ENCODE measurements at regions of chr2 and their contacts with region 1.

Region 1: DNA sequence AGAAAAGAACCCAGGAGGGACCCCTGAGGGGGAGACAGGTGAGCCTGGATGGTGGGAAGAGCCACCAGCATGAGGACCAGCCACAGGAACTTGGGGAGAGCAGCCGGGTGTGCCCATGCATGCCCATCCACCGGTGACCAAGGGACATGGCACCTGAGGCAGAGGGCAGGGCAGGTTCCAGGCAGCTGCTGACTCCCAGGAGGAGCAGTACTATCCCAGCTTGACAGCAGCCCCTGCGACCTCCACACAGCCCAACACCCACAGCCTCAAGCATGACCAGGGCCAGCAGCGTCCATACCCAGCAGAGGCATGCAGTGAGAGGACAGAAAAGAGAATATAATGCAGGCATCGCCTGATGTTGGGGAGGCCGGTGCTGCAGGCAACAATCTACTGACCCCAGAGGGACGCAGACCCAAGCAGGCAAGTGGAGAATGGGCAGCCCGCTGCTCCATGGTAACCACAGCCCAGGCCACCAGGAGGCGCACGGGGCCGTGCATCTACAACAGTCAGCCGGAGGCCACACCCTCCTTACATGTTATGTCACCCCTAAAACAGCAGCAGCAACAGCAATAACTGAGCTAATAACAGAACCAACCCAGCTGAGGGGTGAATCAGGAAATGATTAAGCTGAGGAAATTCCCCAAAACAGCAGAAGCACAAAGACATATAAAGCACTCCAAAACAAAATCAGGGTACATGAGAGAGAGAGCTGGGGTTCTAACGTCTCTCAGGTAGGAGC is 44.1 kb downstream of the ANKMY1 start:
- DNase-seq: peak; percentile 89
- ATAC-seq: peak; percentile 95 to 96

Region 2: DNA sequence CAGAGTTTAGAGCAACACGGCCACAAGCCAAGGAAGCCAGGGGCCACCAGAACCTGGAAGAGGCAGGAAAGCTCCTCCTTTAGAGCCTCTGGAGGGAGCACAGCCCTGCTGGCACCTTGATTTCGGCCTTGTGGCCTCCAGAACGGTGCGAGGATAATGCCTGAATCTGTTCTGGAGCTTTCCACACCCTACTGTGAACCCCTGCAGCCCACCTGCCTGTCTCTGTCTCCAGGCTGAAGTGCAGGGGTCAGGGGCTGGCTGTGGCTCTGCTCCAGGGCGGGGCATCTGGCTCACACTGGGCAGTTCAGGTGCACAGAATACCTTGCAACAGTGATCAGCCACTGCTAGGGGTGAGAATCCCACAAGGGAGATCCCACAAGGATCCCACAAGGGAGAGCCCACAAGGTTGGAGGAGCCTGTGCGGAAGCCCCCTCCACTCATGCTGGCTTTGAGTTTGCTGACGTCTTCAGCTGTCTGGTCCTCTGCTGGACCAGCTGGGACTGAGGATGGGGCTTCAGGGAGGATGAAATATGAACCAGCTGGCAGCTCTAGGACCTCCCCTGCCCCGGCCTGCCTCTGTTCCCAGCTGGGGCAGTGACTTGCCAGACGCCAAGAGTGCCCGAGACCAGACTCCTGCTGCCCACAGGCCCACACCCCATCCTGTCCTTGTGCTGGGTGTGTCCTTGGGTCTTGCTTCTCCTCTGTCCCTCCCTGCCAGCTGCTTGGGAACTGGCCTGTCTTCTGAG is 316.8 kb before region 1 on chr2:
- intact Hi-C with region 1: no loop called
- DNase-seq: no peak
- ATAC-seq: no peak

Region 3: DNA sequence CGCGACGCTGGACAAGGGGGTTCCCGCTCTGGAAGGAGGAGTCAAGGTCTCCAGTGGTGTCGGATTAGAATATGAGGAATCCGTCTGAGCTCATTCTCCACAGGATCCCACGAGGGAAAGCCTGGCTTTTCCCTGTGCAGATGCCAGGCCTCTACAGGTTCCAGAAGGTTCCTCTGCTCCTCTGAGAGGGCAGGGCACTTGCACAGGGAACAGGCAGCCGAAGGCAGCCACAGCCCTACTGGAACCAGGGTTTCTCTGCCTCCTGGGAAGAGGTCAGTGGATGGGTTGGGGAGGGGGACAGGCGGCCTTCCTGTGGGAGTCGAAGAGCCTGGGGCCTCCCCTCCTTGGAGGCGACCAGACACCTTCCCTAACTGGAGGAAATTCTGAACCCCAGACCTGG is 176.3 kb after region 1 on chr2:
- intact Hi-C with region 1: no loop called
- DNase-seq: no peak
- ATAC-seq: no peak

Region 4: DNA sequence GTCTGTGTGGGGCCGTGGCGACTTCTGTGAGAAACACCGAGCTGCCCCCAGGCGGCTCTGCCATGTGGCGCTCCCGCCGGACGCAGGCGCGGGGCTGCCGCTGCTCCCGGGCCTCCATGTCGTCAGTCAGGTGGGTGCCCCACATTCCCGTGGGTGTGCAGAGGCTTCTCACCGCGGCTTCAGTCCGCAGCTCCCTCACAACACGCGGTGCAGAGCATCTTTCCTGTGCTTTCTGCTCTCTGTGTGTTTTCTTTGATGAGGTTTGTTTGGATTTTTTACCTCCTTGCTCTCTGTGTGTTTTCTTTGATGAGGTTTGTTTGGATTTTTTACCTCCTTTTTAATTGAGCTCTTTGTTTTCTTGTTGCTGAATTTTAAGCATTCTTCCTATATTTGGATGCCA is 190.9 kb after region 1 on chr2:
- intact Hi-C with region 1: loop called (anchors 5 to 10 kb)
- DNase-seq: peak; percentile 6
- ATAC-seq: no peak

Region 5: GRCh38 chr2:240832205-240832727 is 318.5 kb after region 1 on chr2:
- intact Hi-C with region 1: loop called (anchors 10 kb)
- DNase-seq: peak; percentile 94
- ATAC-seq: peak; percentile 87 to 92